Esophagus squamous epithelium (tissue), 5 donors: ENCODE measurements at regions of chr6 and their contacts with region 1.

Region 1: GRCh38 chr6:34982424-34982852 is 93.4 kb downstream of the ANKS1A start:
- DNase-seq: no peak
- H3K4me3 ChIP-seq: no peak overlapping the region
- H3K27ac ChIP-seq: no peak overlapping the region
- H3K4me1 ChIP-seq: peaks cover 0 to 7% (median 0%) of the 10 kb centered on the region in 3 donors
- H3K27me3 ChIP-seq: no peaks in the 10 kb centered on the region
- CTCF ChIP-seq: peak in 3 of 6 experiments; percentile 13 to 47 (median 13)
- POLR2A ChIP-seq: no peak

Region 2: DNA sequence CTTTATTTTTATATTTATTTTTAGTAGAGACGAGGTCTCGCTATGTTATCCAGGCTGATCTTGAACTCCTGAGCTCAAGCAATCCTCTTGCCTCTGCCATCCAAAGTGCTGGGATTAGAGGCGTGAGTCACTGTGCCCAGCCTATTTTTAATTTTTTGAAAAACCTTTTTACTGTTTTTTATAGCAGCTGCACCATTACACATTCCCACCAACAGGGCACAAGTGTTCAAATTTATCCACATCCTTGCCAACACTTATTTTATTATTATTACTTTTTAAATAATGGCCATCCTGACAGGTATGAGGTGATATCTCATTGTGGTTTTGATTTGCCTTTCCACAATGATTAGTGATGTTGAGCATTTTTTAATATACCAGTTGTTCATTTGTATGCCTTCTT is 474.0 kb before region 1 on chr6:
- intact Hi-C with region 1: no loop called
- DNase-seq: no peak
- H3K4me3 ChIP-seq: no peak overlapping the region
- H3K27ac ChIP-seq: no peak overlapping the region
- H3K4me1 ChIP-seq: no peaks in the 10 kb centered on the region
- H3K27me3 ChIP-seq: no peaks in the 10 kb centered on the region
- CTCF ChIP-seq: no peak
- POLR2A ChIP-seq: no peak

Region 3: GRCh38 chr6:35128496-35128895 is 146.1 kb after region 1 on chr6:
- intact Hi-C with region 1: no loop called
- DNase-seq: no peak
- H3K4me3 ChIP-seq: no peak overlapping the region
- H3K27ac ChIP-seq: no peak overlapping the region
- H3K4me1 ChIP-seq: no peaks in the 10 kb centered on the region
- H3K27me3 ChIP-seq: no peaks in the 10 kb centered on the region
- CTCF ChIP-seq: no peak
- POLR2A ChIP-seq: no peak

Region 4: GRCh38 chr6:35139908-35140655 is 157.6 kb after region 1 on chr6:
- intact Hi-C with region 1: loop called (anchors 5 kb)
- DNase-seq: no peak
- H3K4me3 ChIP-seq: no peak overlapping the region
- H3K27ac ChIP-seq: no peak overlapping the region
- H3K4me1 ChIP-seq: peaks cover 0 to 20% (median 13%) of the 10 kb centered on the region in 3 donors
- H3K27me3 ChIP-seq: peaks cover 0 to 18% (median 0%) of the 10 kb centered on the region in 4 donors
- CTCF ChIP-seq: peak; percentile 63 to 88 (median 82)
- POLR2A ChIP-seq: no peak

Region 5: GRCh38 chr6:35445696-35446095 is 463.3 kb after region 1 on chr6:
- intact Hi-C with region 1: no loop called
- DNase-seq: no peak
- H3K4me3 ChIP-seq: no peak overlapping the region
- H3K27ac ChIP-seq: no peak overlapping the region
- H3K4me1 ChIP-seq: peaks cover 0 to 20% (median 0%) of the 10 kb centered on the region in 3 donors
- H3K27me3 ChIP-seq: no peaks in the 10 kb centered on the region
- CTCF ChIP-seq: no peak
- POLR2A ChIP-seq: no peak